ENCODE measurements at regions of chr2 and their contacts with region 1.

Region 1: GRCh38 chr2:96801005-96801785 is 14.9 kb upstream of the CNNM3 start:
- DNase-seq: peak; percentile 75
- ATAC-seq: peak; percentile 96
- H3K4me3 ChIP-seq: no peak overlapping the region
- H3K27ac ChIP-seq: no peak overlapping the region
- H3K4me1 ChIP-seq: no peaks in the 10 kb centered on the region
- H3K27me3 ChIP-seq: no peaks in the 10 kb centered on the region
- CTCF ChIP-seq: peak; percentile 92

Region 2: GRCh38 chr2:96638144-96639121 is 162.8 kb before region 1 on chr2 and contains the start of gene KANSL3:
- CTCF ChIA-PET with region 1: no interaction called
- POLR2A ChIA-PET with region 1: no interaction called
- intact Hi-C with region 1: loop called (anchors 5 kb)
- DNase-seq: peak; percentile 96
- ATAC-seq: peak; percentile 70
- H3K4me3 ChIP-seq: peak within 1 kb of the TSS; percentile 77
- H3K27ac ChIP-seq: peak within 1 kb of the TSS; percentile 77
- H3K4me1 ChIP-seq: peaks cover 18% of the 10 kb centered on the region; the same call in 1 of the 2 replicates
- H3K27me3 ChIP-seq: no peaks in the 10 kb centered on the region
- CTCF ChIP-seq: no peak
- total RNA-seq, gene KANSL3: 30.6 and 35.7 TPM in 2 replicates

Measured in PC-3 (cell line).